ENCODE measurements at regions of chr1 and their contacts with region 1.

Region 1: DNA sequence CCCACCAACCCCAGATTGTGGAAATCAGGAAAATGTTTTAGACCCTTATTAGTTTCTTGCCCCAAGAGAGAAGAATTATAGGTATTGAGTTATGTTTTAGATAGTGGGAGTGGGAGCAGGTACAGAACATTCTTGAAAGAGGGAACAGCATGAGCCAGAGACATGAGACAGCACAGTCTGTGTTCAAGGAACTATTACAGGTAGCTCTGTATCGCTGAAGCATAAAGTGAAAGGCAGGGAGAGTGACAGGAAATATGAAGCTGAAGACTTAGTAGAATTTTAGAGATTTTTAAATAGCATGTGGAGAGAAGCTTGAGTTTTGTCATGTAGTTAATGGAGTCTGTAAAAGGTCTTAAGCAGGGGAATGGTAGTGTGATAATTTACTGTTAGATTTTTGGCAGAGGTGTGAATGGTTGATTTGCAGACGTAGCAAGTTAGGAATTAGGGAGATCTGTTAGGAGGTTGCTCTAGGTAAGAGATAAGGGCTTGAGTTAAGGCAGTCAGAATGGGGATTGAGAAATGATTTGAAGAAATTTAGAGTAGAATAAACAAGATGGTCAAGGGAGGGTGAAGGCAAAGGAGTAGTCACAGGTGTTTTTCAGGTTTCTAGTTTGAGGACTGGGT is 11.6 kb downstream of the SUCO start:
- DNase-seq: no peak
- H3K4me3 ChIP-seq: no peak overlapping the region
- H3K27ac ChIP-seq: no peak overlapping the region
- H3K27me3 ChIP-seq: no peaks in the 10 kb centered on the region
- CTCF ChIP-seq: no peak

Region 2: GRCh38 chr1:172602706-172603105 is 58.1 kb after region 1 on chr1:
- intact Hi-C with region 1: loop called in 1 of 2 experiments (anchors 5 kb)
- DNase-seq: no peak
- H3K4me3 ChIP-seq: peak overlapping the region in 4 of 59 donors; percentile 1 to 14 (median 4)
- H3K27ac ChIP-seq: peak overlapping the region in 43 of 59 donors; percentile 2 to 77 (median 45)
- H3K27me3 ChIP-seq: no peaks in the 10 kb centered on the region
- CTCF ChIP-seq: no peak

Region 3: GRCh38 chr1:173099166-173099565 is 554.6 kb after region 1 on chr1:
- intact Hi-C with region 1: no loop called
- DNase-seq: no peak
- H3K4me3 ChIP-seq: no peak overlapping the region
- H3K27ac ChIP-seq: no peak overlapping the region
- H3K27me3 ChIP-seq: no peaks in the 10 kb centered on the region
- CTCF ChIP-seq: no peak